PC-9 (cell line): ENCODE measurements at regions of chr1 and their contacts with region 1.

Region 1: DNA sequence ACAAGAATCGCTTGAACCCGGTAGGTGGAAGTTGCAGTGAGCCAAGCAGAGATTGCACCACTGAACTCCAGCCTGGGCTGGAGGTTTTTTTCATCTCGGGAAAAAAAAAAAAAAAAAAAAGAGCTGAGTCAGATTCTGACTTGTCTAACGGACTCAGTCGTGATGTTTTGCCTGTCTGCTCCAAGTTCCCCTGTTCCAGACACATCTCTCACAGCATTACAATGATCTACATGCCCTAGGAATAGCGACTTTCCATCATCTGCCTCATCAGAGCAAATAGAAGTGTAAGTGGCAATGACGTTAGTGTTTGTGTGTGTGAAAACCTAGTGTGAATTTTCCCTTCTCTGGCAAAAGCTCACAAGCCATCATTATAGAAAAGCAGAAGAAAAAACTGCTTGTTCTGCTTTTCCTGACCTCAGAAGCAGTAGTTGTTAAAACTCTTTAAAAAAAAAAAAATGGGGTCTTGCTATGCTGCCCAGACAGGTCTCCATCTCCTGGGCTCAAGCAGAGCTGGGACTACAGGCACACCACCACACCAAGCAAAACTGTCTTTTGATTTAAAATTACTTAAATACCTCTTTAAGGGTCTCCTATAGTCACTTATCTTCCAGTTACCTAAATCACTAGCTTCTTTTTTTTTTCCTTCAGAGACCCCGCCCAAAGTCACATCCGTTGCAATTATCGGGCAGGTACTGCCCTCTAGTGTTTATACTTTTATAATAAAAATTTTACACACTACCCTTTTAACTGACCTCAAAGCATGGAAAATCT is 37.3 kb downstream of the PLEKHO1 start:
- DNase-seq: peak in 1 of 2 experiments; percentile 56
- H3K4me3 ChIP-seq: peak overlapping the region; percentile 37; the same call in 1 of the 2 replicates
- H3K27ac ChIP-seq: peak overlapping the region; percentile 77
- H3K4me1 ChIP-seq: peaks cover 13% of the 10 kb centered on the region; the same call in 1 of the 2 replicates
- H3K27me3 ChIP-seq: no peaks in the 10 kb centered on the region
- CTCF ChIP-seq: peak; percentile 87

Region 2: DNA sequence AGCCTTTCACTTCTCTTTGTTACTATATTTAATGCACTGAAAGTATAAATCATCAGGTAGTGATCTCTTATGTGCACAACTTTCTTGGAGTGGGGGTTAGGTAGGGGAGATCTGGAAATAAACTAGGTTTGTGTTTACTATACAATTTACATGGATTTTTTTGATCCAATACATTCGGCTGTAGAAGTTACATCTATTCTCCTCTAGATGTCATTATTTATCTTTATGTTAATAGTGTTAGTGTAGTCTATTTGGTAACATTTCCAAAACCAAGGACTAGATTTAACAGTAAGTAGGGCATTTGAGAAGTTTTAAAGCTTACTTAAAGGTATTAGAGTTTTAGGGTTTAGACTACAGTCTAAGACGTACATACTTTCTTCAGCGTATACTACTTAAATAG is 114.0 kb before region 1 on chr1:
- CTCF ChIA-PET with region 1: interaction called, 4 read pairs
- POLR2A ChIA-PET with region 1: no interaction called
- intact Hi-C with region 1: loop called (anchors 1 kb)
- DNase-seq: no peak
- H3K4me3 ChIP-seq: no peak overlapping the region
- H3K27ac ChIP-seq: no peak overlapping the region
- H3K4me1 ChIP-seq: peaks cover 9% of the 10 kb centered on the region; the same call in 1 of the 2 replicates
- H3K27me3 ChIP-seq: no peaks in the 10 kb centered on the region
- CTCF ChIP-seq: peak; percentile 65

Region 3: DNA sequence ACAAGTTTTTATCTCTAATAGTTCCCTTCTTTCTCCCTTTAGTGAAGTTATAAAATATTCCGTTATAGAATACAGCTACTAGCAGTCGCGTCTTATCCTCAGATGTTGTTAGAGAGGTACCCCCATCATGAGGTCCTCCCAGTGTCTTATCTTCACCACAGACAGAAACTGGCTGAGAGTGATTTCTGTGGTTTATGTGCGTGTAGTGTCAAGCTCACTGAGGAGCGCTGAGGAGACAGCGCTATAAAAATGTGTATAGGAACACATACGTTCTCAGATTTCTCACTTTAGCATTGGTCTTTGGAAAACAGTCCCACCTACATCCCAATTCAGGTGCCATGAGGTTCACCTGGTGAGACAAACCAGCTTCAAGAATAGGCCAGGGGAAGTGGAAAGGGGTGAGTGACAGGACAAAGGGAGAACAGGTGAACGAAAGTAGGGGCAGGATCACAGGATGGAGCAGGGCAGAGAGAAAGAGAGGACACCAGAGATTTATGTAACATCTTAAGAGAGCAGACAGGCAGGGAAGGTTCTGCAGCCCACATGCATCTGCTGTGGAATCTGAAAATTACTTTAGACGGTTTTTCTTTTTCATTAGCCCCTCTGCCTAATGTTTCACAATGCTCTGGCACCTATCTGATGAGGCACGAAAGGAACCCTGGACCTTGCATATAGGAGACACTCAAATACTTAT is 40.0 kb before region 1 on chr1:
- CTCF ChIA-PET with region 1: interaction called, 12 read pairs
- POLR2A ChIA-PET with region 1: no interaction called
- intact Hi-C with region 1: no loop called
- DNase-seq: no peak
- H3K4me3 ChIP-seq: no peak overlapping the region
- H3K27ac ChIP-seq: no peak overlapping the region
- H3K4me1 ChIP-seq: no peaks in the 10 kb centered on the region
- H3K27me3 ChIP-seq: no peaks in the 10 kb centered on the region
- CTCF ChIP-seq: no peak

Region 4: GRCh38 chr1:150389650-150390049 is 202.7 kb after region 1 on chr1:
- CTCF ChIA-PET with region 1: no interaction called
- POLR2A ChIA-PET with region 1: no interaction called
- intact Hi-C with region 1: no loop called
- DNase-seq: no peak
- H3K4me3 ChIP-seq: no peak overlapping the region
- H3K27ac ChIP-seq: no peak overlapping the region
- H3K4me1 ChIP-seq: no peaks in the 10 kb centered on the region
- H3K27me3 ChIP-seq: no peaks in the 10 kb centered on the region
- CTCF ChIP-seq: no peak